ENCODE measurements at regions of chr1 and their contacts with region 1.

Region 1: GRCh38 chr1:54715493-54716298 is at the start of gene TTC4:
- DNase-seq: peak; percentile 71 to 92 (median 85)
- ATAC-seq: peak; percentile 99
- H3K4me3 ChIP-seq: peak within 1 kb of the TSS; percentile 86
- H3K4me3 Mint-ChIP-seq: peak within 1 kb of the TSS; percentile 81 to 96 (median 88)
- H3K27ac ChIP-seq: peak within 1 kb of the TSS; percentile 84
- H3K27ac Mint-ChIP-seq: peak within 1 kb of the TSS; percentile 58 to 94 (median 91)
- H3K4me1 ChIP-seq: peaks cover 14 to 15% of the 10 kb centered on the region in 2 donors
- H3K4me1 Mint-ChIP-seq: peaks cover 15 to 42% (median 34%) of the 10 kb centered on the region in 7 donors
- H3K27me3 ChIP-seq: no peaks in the 10 kb centered on the region
- H3K27me3 Mint-ChIP-seq: no peaks in the 10 kb centered on the region
- total RNA-seq, gene TTC4: 11.6 to 25.8 (median 21.4) TPM

Region 2: GRCh38 chr1:53889304-53890298 is 826.1 kb before region 1 on chr1 and contains the start of gene YIPF1:
- CTCF ChIA-PET with region 1: no interaction called
- POLR2A ChIA-PET with region 1: no interaction called
- intact Hi-C with region 1: loop called in 1 of 2 experiments (anchors 5 kb)
- DNase-seq: peak; percentile 61 to 88 (median 85)
- ATAC-seq: peak; percentile 98
- H3K4me3 ChIP-seq: peak within 1 kb of the TSS; percentile 79
- H3K4me3 Mint-ChIP-seq: peak within 1 kb of the TSS; percentile 88 to 98 (median 96)
- H3K27ac ChIP-seq: peak within 1 kb of the TSS; percentile 75
- H3K27ac Mint-ChIP-seq: peak within 1 kb of the TSS; percentile 89 to 97 (median 95)
- H3K4me1 ChIP-seq: peaks cover 20 to 23% of the 10 kb centered on the region in 2 donors
- H3K4me1 Mint-ChIP-seq: peaks cover 26 to 55% (median 51%) of the 10 kb centered on the region in 7 donors
- H3K27me3 ChIP-seq: no peaks in the 10 kb centered on the region
- H3K27me3 Mint-ChIP-seq: peaks cover 0 to 2% (median 0%) of the 10 kb centered on the region in 5 donors
- total RNA-seq, gene YIPF1: 10.5 to 18.0 (median 16.3) TPM

Region 3: DNA sequence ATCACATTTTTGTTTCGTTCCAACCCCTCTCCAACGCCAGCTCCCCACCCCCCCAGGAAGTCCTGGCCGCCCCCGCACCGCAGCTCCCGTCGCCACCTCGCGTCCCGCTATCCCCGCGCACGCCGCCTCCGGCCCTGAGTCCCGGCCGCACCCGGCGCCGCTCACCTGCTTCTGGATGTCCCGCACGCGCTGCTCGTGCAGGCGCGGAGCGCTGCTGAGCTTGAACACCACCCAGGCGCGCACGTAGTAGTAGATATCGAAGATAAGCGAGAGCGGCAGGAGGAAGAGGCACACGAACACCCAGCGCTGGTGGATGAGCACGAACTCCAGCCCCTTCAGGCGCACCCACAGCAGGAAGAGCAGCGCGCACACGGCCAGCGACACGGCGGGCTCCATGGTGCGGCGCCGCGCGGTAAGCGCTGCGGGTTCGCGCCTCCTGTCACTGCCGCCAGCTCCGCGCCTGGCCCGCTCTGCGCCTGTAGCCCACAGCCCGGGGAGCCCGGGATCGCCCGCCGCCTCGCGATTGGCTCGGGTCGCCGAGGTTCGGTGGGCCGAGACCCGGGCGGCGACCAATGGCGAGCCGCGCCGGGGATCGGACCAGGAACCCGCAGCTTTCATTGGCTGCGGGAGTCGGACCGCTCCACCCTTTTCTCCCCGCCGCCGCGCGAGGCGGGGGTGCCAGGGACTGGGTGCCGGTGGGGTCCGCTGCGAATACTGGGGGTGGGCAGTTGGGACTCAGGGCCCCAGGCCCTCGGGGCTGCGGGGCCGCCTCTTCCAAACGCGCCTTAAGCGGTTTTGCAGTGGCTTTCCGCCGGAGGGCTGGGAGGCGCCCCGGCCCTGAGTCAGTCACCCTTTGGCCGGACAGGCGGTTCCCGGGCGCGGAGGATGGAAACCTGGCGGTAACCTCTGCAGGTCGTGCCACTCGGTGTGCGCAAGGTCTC is 171.3 kb after region 1 on chr1 and contains the start of gene DHCR24:
- CTCF ChIA-PET with region 1: no interaction called
- POLR2A ChIA-PET with region 1: no interaction called
- intact Hi-C with region 1: loop called (anchors 1 kb)
- DNase-seq: peak; percentile 43 to 90 (median 58)
- ATAC-seq: peak; percentile 93
- H3K4me3 ChIP-seq: peak within 1 kb of the TSS; percentile 66
- H3K4me3 Mint-ChIP-seq: peak within 1 kb of the TSS; percentile 89 to 99 (median 96)
- H3K27ac ChIP-seq: peak within 1 kb of the TSS; percentile 27
- H3K27ac Mint-ChIP-seq: peak within 1 kb of the TSS; percentile 25 to 89 (median 73)
- H3K4me1 ChIP-seq: peaks cover 0 to 11% of the 10 kb centered on the region in 2 donors
- H3K4me1 Mint-ChIP-seq: peaks cover 13 to 55% (median 37%) of the 10 kb centered on the region in 7 donors
- H3K27me3 ChIP-seq: no peaks in the 10 kb centered on the region
- H3K27me3 Mint-ChIP-seq: peaks cover 0 to 18% (median 3%) of the 10 kb centered on the region in 5 donors
- total RNA-seq, gene DHCR24: 2.7 to 103 (median 8.3) TPM

Region 4: GRCh38 chr1:55081188-55081904 is 365.6 kb after region 1 on chr1:
- CTCF ChIA-PET with region 1: no interaction called
- POLR2A ChIA-PET with region 1: no interaction called
- intact Hi-C with region 1: no loop called
- DNase-seq: no peak
- ATAC-seq: no peak
- H3K4me3 ChIP-seq: no peak overlapping the region
- H3K4me3 Mint-ChIP-seq: no peak overlapping the region
- H3K27ac ChIP-seq: no peak overlapping the region
- H3K27ac Mint-ChIP-seq: peak overlapping the region in 3 of 9 donors; percentile 22 to 56 (median 54)
- H3K4me1 ChIP-seq: no peaks in the 10 kb centered on the region
- H3K4me1 Mint-ChIP-seq: no peaks in the 10 kb centered on the region
- H3K27me3 ChIP-seq: no peaks in the 10 kb centered on the region
- H3K27me3 Mint-ChIP-seq: no peaks in the 10 kb centered on the region